ENCODE measurements at regions of chr4 and their contacts with region 1.

Region 1: DNA sequence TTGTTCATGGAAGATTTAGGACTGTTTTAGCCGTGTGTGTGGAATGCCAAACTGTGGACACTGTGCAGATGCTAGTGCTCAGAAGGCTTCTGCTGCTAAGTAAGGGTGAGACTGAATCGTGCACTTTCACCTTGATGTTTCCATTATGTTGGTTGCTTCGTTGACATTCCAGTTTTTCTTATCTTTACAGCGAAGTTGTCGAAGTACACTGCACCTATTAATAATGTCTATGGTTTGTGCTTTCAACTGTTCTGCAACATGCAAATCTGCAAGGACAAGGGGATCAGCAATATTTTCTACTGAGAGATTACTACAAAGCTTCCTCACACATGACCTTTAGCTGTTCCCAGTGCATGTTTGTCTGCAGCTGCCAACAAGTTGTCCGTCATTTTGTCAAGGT is 67.7 kb downstream of the UGT2A3 start:
- DNase-seq: no peak
- H3K4me3 ChIP-seq: no peak overlapping the region
- H3K27ac ChIP-seq: no peak overlapping the region
- H3K4me1 ChIP-seq: no peaks in the 10 kb centered on the region
- H3K27me3 ChIP-seq: no peaks in the 10 kb centered on the region
- CTCF ChIP-seq: no peak
- EP300 ChIP-seq: no peak
- POLR2A ChIP-seq: no peak

Region 2: GRCh38 chr4:69066945-69067344 is 183.1 kb after region 1 on chr4:
- intact Hi-C with region 1: no loop called
- DNase-seq: no peak
- H3K4me3 ChIP-seq: no peak overlapping the region
- H3K27ac ChIP-seq: no peak overlapping the region
- H3K4me1 ChIP-seq: no peaks in the 10 kb centered on the region
- H3K27me3 ChIP-seq: no peaks in the 10 kb centered on the region
- CTCF ChIP-seq: no peak
- EP300 ChIP-seq: no peak
- POLR2A ChIP-seq: no peak

Region 3: GRCh38 chr4:69126024-69126423 is 242.2 kb after region 1 on chr4:
- intact Hi-C with region 1: loop called (anchors 10 kb)
- DNase-seq: no peak
- H3K4me3 ChIP-seq: no peak overlapping the region
- H3K27ac ChIP-seq: no peak overlapping the region
- H3K4me1 ChIP-seq: no peaks in the 10 kb centered on the region
- H3K27me3 ChIP-seq: no peaks in the 10 kb centered on the region
- CTCF ChIP-seq: no peak
- EP300 ChIP-seq: no peak
- POLR2A ChIP-seq: no peak